Right ventricle myocardium inferior (tissue), 1 donor: ENCODE measurements at regions of chr4 and their contacts with region 1.

Region 1: GRCh38 chr4:124936427-124936826 is 223.9 kb upstream of the ANKRD50 start:
- DNase-seq: no peak
- ATAC-seq: peak; percentile 98

Region 2: GRCh38 chr4:124712372-124713184 is 223.8 kb before region 1 on chr4 and contains the start of gene ANKRD50:
- intact Hi-C with region 1: loop called (anchors 5 kb)
- DNase-seq: peak; percentile 94
- ATAC-seq: peak; percentile 91
- total RNA-seq, gene ANKRD50: 6.5 TPM

Region 3: GRCh38 chr4:124903995-124904722 is 32.3 kb before region 1 on chr4:
- intact Hi-C with region 1: loop called (anchors 5 kb)
- DNase-seq: no peak
- ATAC-seq: peak; percentile 94